PC-9 (cell line): ENCODE measurements at regions of chr17 and their contacts with region 1.

Region 1: GRCh38 chr17:28750178-28751047 is 6.6 kb downstream of the TRAF4 start:
- DNase-seq: peak; percentile 76 to 91
- H3K4me3 ChIP-seq: no peak overlapping the region
- H3K27ac ChIP-seq: no peak overlapping the region
- H3K4me1 ChIP-seq: peaks cover 43% of the 10 kb centered on the region
- H3K27me3 ChIP-seq: no peaks in the 10 kb centered on the region
- CTCF ChIP-seq: peak; percentile 98

Region 2: DNA sequence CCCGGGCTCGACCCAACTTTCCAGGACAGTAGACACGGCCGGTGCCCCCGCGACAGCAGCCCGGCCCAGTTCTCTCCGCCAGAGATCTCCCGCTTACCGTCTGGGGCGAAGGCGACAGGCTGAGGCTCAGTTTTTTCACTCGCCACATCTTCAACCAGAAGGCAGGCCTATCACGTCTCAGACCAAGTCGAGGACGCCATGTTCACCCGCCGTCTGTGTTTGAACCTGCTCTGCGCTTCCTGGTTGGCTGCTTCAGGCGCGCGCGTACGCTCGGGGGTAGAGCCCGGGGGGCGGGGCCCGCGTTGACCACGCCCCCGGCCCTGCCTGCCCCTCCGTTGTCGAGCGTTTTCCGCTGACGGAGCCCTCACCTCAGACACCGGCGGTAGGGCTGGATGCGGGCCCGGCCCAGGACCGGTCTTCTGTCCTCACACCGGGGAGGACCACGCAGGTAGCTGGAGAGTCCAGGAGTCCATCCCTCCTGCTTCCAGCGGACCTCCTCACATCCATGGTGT is 151.6 kb before region 1 on chr17 and contains the start of gene SPAG5:
- CTCF ChIA-PET with region 1: no interaction called
- POLR2A ChIA-PET with region 1: no interaction called
- intact Hi-C with region 1: no loop called
- DNase-seq: peak; percentile 87 to 93
- H3K4me3 ChIP-seq: peak within 1 kb of the TSS; percentile 79
- H3K27ac ChIP-seq: peak within 1 kb of the TSS; percentile 70
- H3K4me1 ChIP-seq: peaks cover 17% of the 10 kb centered on the region
- H3K27me3 ChIP-seq: no peaks in the 10 kb centered on the region
- CTCF ChIP-seq: no peak
- total RNA-seq, gene SPAG5: 101 and 109 TPM in 2 replicates

Region 3: DNA sequence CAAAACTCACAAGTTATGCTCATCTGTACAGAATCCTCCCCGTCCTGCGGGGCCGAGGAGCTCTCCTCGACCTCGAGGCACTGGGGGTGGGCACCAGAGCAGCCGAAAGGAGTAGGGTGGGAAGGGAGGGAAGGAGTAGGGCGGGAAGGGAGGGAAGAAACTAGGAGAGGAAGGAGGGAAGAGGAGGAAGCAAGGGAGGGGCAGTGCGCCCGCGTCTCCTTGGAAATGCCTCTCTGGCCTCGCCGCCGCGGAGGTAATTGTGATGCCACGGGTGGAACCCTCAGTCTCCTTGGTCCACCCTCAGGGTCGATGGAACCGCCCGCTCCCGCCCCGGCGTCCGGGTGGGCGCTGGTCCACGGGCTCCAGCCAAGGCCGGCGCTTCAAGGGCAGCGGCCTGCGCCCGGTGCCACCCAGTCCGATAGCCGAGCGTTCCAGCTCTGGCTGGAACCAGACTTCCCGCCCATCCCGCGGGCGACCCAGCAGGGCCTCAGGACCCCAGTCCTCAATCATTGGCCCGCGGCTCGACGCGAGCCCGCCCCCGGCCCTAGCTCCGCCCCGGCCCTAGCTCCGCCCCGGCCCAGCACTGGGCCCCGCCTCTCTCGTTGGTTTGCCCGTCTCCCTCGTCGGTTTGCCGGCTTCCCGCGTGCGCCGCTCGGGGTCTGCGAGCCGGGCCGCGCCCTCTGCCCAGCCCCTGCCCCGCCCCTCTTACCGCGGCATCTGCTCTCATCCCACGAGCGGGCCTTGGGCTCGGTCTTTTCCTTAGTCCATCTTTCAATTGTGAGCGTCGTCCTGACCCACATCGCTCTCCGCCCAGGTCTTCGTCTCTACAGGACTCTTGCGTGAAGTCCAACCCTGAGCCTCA is 39.3 kb before region 1 on chr17:
- CTCF ChIA-PET with region 1: no interaction called
- POLR2A ChIA-PET with region 1: interaction called, 11 read pairs
- intact Hi-C with region 1: no loop called
- DNase-seq: peak; percentile 66 to 95
- H3K4me3 ChIP-seq: peak overlapping the region; percentile 82
- H3K27ac ChIP-seq: peak overlapping the region; percentile 17; the same call in 1 of the 2 replicates
- H3K4me1 ChIP-seq: peaks cover 14% of the 10 kb centered on the region
- H3K27me3 ChIP-seq: no peaks in the 10 kb centered on the region
- CTCF ChIP-seq: no peak